ENCODE measurements at regions of chr14 and their contacts with region 1.

Region 1: DNA sequence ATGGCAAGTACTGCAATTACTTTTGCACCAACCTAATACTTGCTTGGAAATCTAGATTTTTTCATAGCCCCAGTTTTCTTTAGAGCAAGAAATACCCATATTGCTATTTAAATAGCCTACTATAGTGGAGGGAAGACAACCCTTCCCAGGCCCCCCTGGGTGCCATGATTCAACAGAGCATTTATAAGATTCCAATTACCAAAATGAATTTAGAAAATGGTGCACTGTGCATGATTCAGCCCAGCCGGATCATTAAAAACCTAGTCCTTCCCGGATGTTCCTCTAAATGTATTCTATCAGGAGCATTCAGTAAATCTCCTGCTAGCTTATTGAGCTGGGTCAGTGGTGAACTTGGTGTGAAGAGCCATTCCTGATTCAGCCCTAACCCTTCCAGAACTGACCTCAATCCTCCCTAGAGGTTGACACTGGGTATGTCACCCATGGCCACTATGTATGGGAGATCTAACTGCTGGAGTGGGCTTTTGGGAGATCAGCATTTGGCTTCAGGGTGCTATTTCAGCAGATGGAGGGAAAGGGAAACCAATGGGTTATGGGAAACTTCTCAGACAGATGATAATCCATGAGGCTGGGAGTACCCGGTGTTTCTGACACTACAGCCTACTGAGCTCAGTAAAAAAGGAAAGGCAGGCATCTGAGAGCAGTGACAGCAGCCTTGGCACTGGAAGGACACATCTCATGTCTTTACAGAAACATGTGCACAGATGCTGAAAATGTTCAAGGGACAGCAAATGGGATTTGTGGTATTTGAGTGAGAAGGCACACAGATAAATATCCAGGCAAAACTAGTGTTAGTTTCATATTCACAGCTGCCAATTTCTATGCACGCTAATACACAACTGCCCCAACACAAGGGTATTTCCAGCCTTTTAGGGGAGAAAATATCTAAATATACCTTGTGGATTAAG is 258.9 kb downstream of the DPF3 start:
- DNase-seq: no peak
- ATAC-seq: no peak
- H3K4me3 ChIP-seq: no peak overlapping the region
- H3K27ac ChIP-seq: no peak overlapping the region
- H3K4me1 ChIP-seq: peaks cover 26 to 29% of the 10 kb centered on the region in 2 donors
- H3K27me3 ChIP-seq: no peaks in the 10 kb centered on the region
- CTCF ChIP-seq: no peak
- POLR2A ChIP-seq: no peak

Region 2: GRCh38 chr14:72554994-72555604 is 79.9 kb before region 1 on chr14:
- in situ Hi-C with region 1: no loop called
- intact Hi-C with region 1: loop called (anchors 5 kb)
- DNase-seq: no peak
- ATAC-seq: no peak
- H3K4me3 ChIP-seq: no peak overlapping the region
- H3K27ac ChIP-seq: no peak overlapping the region
- H3K4me1 ChIP-seq: peaks cover 15 to 20% of the 10 kb centered on the region in 2 donors
- H3K27me3 ChIP-seq: no peaks in the 10 kb centered on the region
- CTCF ChIP-seq: peak in 1 of 5 experiments; percentile 16
- POLR2A ChIP-seq: no peak

Region 3: DNA sequence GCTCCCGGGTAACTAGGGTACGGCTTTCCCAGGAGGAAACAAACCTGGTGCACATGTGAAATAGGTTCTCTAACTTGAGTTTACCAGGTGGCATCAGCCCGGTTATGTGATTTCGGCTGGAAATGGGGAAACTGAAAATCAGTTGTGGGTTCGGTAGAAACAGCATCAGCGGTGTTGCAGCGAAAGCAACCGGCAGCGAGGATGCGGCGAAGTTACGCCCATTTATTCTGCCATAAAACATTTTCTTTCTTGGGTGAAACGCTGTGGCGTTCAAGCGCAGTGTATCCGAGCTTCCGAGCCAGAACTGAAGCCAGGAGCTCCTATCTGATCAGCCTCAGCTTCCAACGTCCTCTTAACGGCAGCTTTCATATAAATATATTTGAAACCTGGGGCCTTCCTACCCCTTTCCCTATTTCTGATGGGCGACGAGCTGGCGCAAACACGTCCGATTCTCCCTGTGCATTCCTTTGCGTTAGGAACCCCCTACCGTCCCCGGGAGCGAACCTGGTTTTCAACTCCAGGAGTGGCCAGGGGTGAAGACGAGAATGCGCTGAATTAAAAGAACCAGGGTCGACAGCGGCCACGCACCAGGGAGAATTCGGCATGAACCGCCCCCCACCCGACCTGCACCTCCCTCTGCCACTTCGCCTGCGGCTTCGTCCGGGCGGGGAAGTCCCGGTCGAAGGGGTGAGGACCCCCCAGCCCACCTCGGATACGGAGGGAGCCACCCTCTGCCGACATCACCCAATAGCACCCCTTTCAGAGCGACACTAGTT is 257.3 kb after region 1 on chr14:
- in situ Hi-C with region 1: no loop called
- intact Hi-C with region 1: no loop called
- DNase-seq: no peak
- ATAC-seq: no peak
- H3K4me3 ChIP-seq: peak overlapping the region; percentile 89 to 99 (median 96)
- H3K27ac ChIP-seq: peak overlapping the region; percentile 91 to 94 (median 94)
- H3K4me1 ChIP-seq: peaks cover 51 to 61% of the 10 kb centered on the region in 2 donors
- H3K27me3 ChIP-seq: no peaks in the 10 kb centered on the region
- CTCF ChIP-seq: no peak
- POLR2A ChIP-seq: no peak

Region 4: GRCh38 chr14:72952171-72952570 is 317.2 kb after region 1 on chr14:
- in situ Hi-C with region 1: no loop called
- intact Hi-C with region 1: no loop called
- DNase-seq: no peak
- ATAC-seq: no peak
- H3K4me3 ChIP-seq: no peak overlapping the region
- H3K27ac ChIP-seq: no peak overlapping the region
- H3K4me1 ChIP-seq: no peaks in the 10 kb centered on the region
- H3K27me3 ChIP-seq: no peaks in the 10 kb centered on the region
- CTCF ChIP-seq: no peak
- POLR2A ChIP-seq: no peak

Region 5: DNA sequence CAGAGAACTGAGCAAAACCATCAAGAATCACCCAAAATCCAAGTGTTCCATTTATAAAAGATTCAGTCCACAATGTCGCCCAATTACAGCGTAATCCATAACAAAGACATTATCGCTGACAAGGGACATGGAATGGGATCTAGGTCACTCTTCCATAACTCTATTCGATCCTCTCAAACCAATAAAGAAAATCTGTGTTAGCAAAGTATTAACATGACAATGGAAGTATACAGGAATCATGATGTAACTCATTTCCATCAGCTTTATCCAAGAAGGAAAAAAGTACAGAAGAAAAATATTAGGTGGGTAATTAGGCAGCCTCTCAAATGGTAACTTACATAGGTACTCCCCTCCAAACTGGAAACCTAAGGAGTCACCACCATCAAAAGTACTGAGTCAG is 387.1 kb after region 1 on chr14:
- in situ Hi-C with region 1: no loop called
- intact Hi-C with region 1: no loop called
- DNase-seq: no peak
- ATAC-seq: no peak
- H3K4me3 ChIP-seq: peak overlapping the region in 1 of 4 donors; percentile 15
- H3K27ac ChIP-seq: peak overlapping the region in 1 of 4 donors; percentile 14
- H3K4me1 ChIP-seq: peaks cover 19 to 40% of the 10 kb centered on the region in 2 donors
- H3K27me3 ChIP-seq: no peaks in the 10 kb centered on the region
- CTCF ChIP-seq: no peak
- POLR2A ChIP-seq: no peak

Measured in gastrocnemius medialis (tissue), 4 donors.